ENCODE measurements at regions of chr10 and their contacts with region 1.

Region 1: GRCh38 chr10:59580026-59580863 is 129.4 kb downstream of the SLC16A9 start:
- DNase-seq: peak; percentile 45
- H3K4me3 ChIP-seq: no peak overlapping the region
- H3K27ac ChIP-seq: no peak overlapping the region
- H3K4me1 ChIP-seq: peaks cover 13 to 15% of the 10 kb centered on the region in 2 experiments; a peak in 3 of 4 replicates
- H3K27me3 ChIP-seq: no peaks in the 10 kb centered on the region
- CTCF ChIP-seq: peak; percentile 83
- EP300 ChIP-seq: no peak
- RAD21 ChIP-seq: peak; percentile 91

Region 2: GRCh38 chr10:59234816-59235429 is 345.3 kb before region 1 on chr10:
- CTCF ChIA-PET with region 1: interaction called, 22 read pairs
- POLR2A ChIA-PET with region 1: no interaction called
- DNase-seq: no peak
- H3K4me3 ChIP-seq: no peak overlapping the region
- H3K27ac ChIP-seq: no peak overlapping the region
- H3K4me1 ChIP-seq: peaks cover 0 to 5% of the 10 kb centered on the region in 2 experiments; a peak in 2 of 4 replicates
- H3K27me3 ChIP-seq: no peaks in the 10 kb centered on the region
- CTCF ChIP-seq: peak; percentile 82
- EP300 ChIP-seq: no peak
- RAD21 ChIP-seq: peak; percentile 62

Region 3: GRCh38 chr10:59362144-59362958 is 217.9 kb before region 1 on chr10 and contains the start of gene FAM13C:
- CTCF ChIA-PET with region 1: interaction called, 27 read pairs
- POLR2A ChIA-PET with region 1: interaction called, 3 read pairs
- DNase-seq: peak; percentile 83
- H3K4me3 ChIP-seq: peak within 1 kb of the TSS; percentile 66 to 75
- H3K27ac ChIP-seq: peak within 1 kb of the TSS; percentile 78 to 95
- H3K4me1 ChIP-seq: peaks cover 6 to 9% of the 10 kb centered on the region in 2 experiments; a peak in 3 of 4 replicates
- H3K27me3 ChIP-seq: no peaks in the 10 kb centered on the region
- CTCF ChIP-seq: no peak
- EP300 ChIP-seq: peak in 1 of 2 experiments; percentile 15; a peak in 1 of 4 replicates
- RAD21 ChIP-seq: no peak
- polyA plus RNA-seq, gene FAM13C: 7.0 and 7.6 TPM in 2 replicates

Region 4: DNA sequence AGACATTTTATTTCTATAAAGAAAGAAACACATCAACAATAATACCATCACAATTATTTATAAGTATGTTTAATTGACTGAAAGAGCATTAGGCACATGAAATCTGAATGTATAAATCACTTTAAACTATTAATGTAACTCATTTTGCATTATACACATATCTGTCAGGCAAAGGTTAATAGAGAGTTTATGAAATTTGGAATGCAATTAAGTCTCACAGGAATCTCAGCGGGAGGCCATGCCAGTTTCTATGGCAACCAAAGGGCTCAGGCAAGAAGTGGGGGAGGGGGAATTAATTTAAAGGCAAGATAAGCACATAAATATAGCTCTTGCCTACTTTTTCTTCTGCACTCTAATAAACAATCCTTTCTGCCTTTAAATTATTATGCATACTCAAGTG is 23.2 kb before region 1 on chr10:
- CTCF ChIA-PET with region 1: interaction called, 14 read pairs
- POLR2A ChIA-PET with region 1: no interaction called
- DNase-seq: peak; percentile 40
- H3K4me3 ChIP-seq: peak overlapping the region in 1 of 2 experiments; percentile 1; a peak in 1 of 4 replicates
- H3K27ac ChIP-seq: peak overlapping the region in 1 of 2 experiments; percentile 50; a peak in 2 of 4 replicates
- H3K4me1 ChIP-seq: peaks cover 11 to 31% of the 10 kb centered on the region in 2 experiments
- H3K27me3 ChIP-seq: no peaks in the 10 kb centered on the region
- CTCF ChIP-seq: no peak
- EP300 ChIP-seq: peak; percentile 48 to 73; a peak in 3 of 4 replicates
- RAD21 ChIP-seq: no peak

Measured in SK-N-SH (cell line).